ENCODE measurements at regions of chrX and their contacts with region 1.

Region 1: DNA sequence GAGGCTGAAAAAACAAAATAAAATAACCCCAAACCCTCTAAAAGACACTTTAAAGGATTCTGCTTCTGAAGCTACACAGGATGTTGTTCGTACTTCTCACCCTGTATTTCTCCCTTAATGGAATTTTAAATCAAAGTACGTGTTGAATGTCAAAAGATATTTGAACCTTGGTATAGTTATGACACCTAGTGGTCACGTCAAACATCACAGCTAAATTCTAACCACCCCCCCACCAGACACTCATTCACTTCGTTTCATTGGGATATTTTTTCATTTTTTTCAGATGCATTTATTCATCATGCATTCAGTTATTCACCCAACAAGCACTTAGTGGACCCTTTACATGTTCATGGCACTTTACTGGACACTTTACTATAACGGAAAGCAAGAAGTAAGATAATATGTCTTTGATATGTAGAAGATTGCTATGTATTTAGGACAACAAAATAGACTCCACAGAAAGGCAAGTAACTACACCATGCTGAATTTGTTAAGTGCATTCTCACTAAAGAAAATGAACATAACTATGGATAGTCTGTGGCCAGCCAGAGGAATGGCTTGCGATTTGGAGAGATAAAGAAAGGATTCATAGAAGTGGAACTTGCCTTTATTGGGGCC is 62.5 kb upstream of the GPR174 start:
- DNase-seq: peak; percentile 61
- ATAC-seq: peak; percentile 87
- H3K4me3 ChIP-seq: no peak overlapping the region
- H3K27ac ChIP-seq: no peak overlapping the region
- H3K4me1 ChIP-seq: no peaks in the 10 kb centered on the region
- H3K27me3 ChIP-seq: no peaks in the 10 kb centered on the region
- CTCF ChIP-seq: peak; percentile 54 to 82 (median 63); a peak in 5 of 6 replicates
- EP300 ChIP-seq: no peak
- POLR2A ChIP-seq: no peak
- RAD21 ChIP-seq: peak; percentile 83

Region 2: DNA sequence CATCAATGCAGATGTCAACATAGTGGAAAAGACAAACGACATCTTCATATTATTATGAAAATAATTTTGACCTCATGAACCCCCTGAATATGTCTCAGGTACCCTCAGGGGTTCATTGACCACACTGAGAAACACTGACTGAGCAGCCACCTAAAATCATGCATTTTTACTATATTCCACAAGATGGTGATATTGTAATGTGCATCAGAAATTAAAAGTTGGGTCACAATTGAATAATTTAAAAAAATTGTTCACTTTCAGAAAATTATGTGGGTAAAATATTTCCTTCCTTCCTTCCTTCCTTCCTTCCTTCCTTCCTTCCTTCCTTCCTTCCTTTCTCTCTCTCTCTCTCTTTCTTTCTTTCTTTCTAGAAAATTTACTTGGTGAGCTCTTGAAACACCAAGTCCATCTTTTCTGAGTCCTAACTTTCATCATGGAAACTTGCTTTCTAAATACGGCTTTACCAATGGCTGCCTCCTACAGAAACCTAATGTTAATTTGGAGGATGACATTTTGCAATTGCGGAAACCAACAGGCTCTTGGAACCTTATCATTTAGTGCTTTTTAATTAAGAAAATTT is 526.5 kb before region 1 on chrX:
- CTCF ChIA-PET with region 1: interaction called, 57 read pairs
- POLR2A ChIA-PET with region 1: no interaction called
- RAD21 ChIA-PET with region 1: interaction called, 54 read pairs
- SMC1A ChIA-PET with region 1: interaction called, 69 read pairs
- in situ Hi-C with region 1: loop called (anchors 5 kb)
- intact Hi-C with region 1: loop called (anchors 1 kb)
- DNase-seq: no peak
- ATAC-seq: peak; percentile 48; the same call in 2 of the 3 replicates
- H3K4me3 ChIP-seq: no peak overlapping the region
- H3K27ac ChIP-seq: no peak overlapping the region
- H3K4me1 ChIP-seq: no peaks in the 10 kb centered on the region
- H3K27me3 ChIP-seq: no peaks in the 10 kb centered on the region
- CTCF ChIP-seq: peak; percentile 28 to 58 (median 49); a peak in 4 of 6 replicates
- EP300 ChIP-seq: no peak
- POLR2A ChIP-seq: no peak
- RAD21 ChIP-seq: peak; percentile 79

Region 3: GRCh38 chrX:78886550-78886949 is 195.5 kb before region 1 on chrX:
- CTCF ChIA-PET with region 1: interaction called, 3 read pairs
- POLR2A ChIA-PET with region 1: no interaction called
- RAD21 ChIA-PET with region 1: interaction called, 7 read pairs
- SMC1A ChIA-PET with region 1: interaction called, 6 read pairs
- in situ Hi-C with region 1: no loop called
- intact Hi-C with region 1: loop called (anchors 5 kb)
- DNase-seq: peak; percentile 5
- ATAC-seq: peak; percentile 85
- H3K4me3 ChIP-seq: no peak overlapping the region
- H3K27ac ChIP-seq: no peak overlapping the region
- H3K4me1 ChIP-seq: no peaks in the 10 kb centered on the region
- H3K27me3 ChIP-seq: no peaks in the 10 kb centered on the region
- CTCF ChIP-seq: peak; percentile 28 to 47 (median 38); a peak in 3 of 6 replicates
- EP300 ChIP-seq: no peak
- POLR2A ChIP-seq: no peak
- RAD21 ChIP-seq: no peak

Region 4: DNA sequence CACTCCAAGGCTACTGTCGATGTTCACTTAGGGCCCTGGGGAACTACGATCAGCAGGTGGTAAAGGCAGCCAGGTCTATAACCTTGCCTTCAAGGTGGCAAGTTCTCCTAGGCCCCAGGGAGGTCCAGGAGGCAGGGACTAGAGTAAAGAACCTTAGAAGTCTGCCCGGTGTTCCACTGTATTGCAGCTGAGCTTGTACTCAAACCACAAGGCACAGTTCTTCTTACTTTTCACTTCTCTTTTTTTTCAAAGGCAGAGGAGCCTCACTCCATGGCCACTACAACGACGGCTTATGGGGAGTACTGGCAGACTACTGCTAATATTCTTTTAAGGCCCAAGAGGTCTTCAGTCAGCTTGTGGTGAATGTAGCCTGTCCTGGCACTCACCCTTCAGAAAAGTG is 16.3 kb before region 1 on chrX:
- CTCF ChIA-PET with region 1: interaction called, 7 read pairs
- POLR2A ChIA-PET with region 1: no interaction called
- RAD21 ChIA-PET with region 1: interaction called, 4 read pairs
- SMC1A ChIA-PET with region 1: interaction called, 13 read pairs
- in situ Hi-C with region 1: no loop called
- intact Hi-C with region 1: no loop called
- DNase-seq: peak; percentile 51
- ATAC-seq: peak; percentile 98
- H3K4me3 ChIP-seq: no peak overlapping the region
- H3K27ac ChIP-seq: peak overlapping the region; percentile 34; the same call in 1 of the 2 replicates
- H3K4me1 ChIP-seq: peaks cover 3% of the 10 kb centered on the region; the same call in 1 of the 2 replicates
- H3K27me3 ChIP-seq: no peaks in the 10 kb centered on the region
- CTCF ChIP-seq: no peak
- EP300 ChIP-seq: no peak
- POLR2A ChIP-seq: no peak
- RAD21 ChIP-seq: no peak; the same call in 1 of the 2 replicates

Region 5: DNA sequence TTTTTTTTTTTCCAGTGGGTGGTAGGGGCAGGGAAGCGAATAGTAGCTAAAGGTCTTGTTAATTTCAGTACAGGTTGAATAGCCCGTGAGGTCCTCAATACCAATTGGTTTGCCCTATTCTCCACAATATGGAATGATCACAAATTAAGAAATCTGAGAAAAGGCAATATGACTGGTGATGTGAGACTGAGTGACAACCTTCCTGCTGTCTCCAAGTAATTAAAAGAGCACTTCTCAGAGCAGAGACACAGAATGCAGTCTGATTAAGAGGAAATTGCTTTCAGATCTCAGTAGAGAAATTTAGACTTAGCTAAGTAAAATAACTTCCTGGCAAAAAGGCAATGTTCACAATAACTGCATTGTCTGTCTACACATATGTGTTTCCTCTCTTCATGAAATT is 85.5 kb after region 1 on chrX:
- CTCF ChIA-PET with region 1: no interaction called
- POLR2A ChIA-PET with region 1: no interaction called
- RAD21 ChIA-PET with region 1: interaction called, 3 read pairs
- SMC1A ChIA-PET with region 1: interaction called, 10 read pairs
- in situ Hi-C with region 1: no loop called
- intact Hi-C with region 1: no loop called
- DNase-seq: no peak
- ATAC-seq: peak; percentile 24; the same call in 2 of the 3 replicates
- H3K4me3 ChIP-seq: no peak overlapping the region
- H3K27ac ChIP-seq: no peak overlapping the region
- H3K4me1 ChIP-seq: peaks cover 7% of the 10 kb centered on the region
- H3K27me3 ChIP-seq: no peaks in the 10 kb centered on the region
- CTCF ChIP-seq: no peak
- EP300 ChIP-seq: no peak
- POLR2A ChIP-seq: no peak
- RAD21 ChIP-seq: no peak

Region 6: GRCh38 chrX:79412972-79413371 is 331.0 kb after region 1 on chrX:
- CTCF ChIA-PET with region 1: interaction called, 18 read pairs
- POLR2A ChIA-PET with region 1: no interaction called
- RAD21 ChIA-PET with region 1: interaction called, 4 read pairs
- SMC1A ChIA-PET with region 1: interaction called, 8 read pairs
- in situ Hi-C with region 1: no loop called
- intact Hi-C with region 1: loop called (anchors 2 kb)
- DNase-seq: no peak
- ATAC-seq: no peak
- H3K4me3 ChIP-seq: no peak overlapping the region
- H3K27ac ChIP-seq: no peak overlapping the region
- H3K4me1 ChIP-seq: no peaks in the 10 kb centered on the region
- H3K27me3 ChIP-seq: no peaks in the 10 kb centered on the region
- CTCF ChIP-seq: peak in 2 of 3 experiments; percentile 14 to 34; a peak in 4 of 6 replicates
- EP300 ChIP-seq: no peak
- POLR2A ChIP-seq: no peak
- RAD21 ChIP-seq: peak; percentile 62

Measured in GM12878 (cell line).